Mammary epithelial cell (primary cell): ENCODE measurements at regions of chr4 and their contacts with region 1.

Region 1: DNA sequence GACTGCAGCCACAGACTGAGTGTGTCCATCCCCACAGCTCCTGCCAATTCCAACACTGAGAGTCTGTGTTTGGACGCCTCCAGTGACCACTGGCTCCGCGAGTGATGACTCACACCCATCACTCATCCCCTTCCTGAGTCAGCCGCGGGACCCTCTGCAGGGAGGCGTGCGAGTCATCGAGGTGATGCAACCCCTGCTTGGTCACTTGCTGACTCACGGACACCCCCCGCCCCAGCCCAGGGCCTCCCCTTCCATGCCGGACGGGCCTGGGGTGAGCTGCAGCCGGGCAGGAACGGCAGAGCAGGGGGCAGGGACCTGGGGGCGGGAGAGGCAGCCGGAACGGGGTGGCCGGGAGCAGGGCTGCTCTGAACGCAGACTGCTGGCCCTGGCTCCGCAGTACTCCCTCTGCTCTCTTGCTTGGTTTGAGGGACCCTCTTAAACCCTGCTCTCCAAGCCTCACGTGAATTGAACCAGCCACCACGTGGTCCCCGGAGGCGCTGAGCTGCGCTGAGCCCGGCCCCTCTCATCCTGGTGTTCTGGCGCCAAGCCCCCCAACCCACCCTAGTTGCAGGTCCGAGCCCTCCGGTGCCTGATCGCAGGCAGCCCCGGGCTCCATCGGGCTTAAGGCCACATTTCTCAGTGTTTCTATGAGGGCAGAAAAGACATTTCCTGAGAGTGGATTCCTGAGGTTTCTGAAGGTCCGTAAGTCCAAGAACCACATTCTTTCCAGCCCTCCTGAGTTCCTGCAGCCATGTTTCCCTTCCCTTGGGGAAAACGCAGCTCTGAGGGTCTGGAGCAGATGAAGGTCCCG is 32.4 kb downstream of the FGFRL1 start:
- DNase-seq: peak; percentile 99
- H3K4me3 ChIP-seq: peak overlapping the region in 1 of 3 experiments; percentile 1
- H3K27ac ChIP-seq: peak overlapping the region; percentile 31
- H3K4me1 ChIP-seq: peaks cover 48% of the 10 kb centered on the region
- H3K27me3 ChIP-seq: no peaks in the 10 kb centered on the region
- CTCF ChIP-seq: no peak

Region 2: GRCh38 chr4:674172-675035 is 369.5 kb before region 1 on chr4 and contains the starts of genes ATP5ME and MYL5:
- CTCF ChIA-PET with region 1: no interaction called
- dilution Hi-C with region 1: no loop called
- in situ Hi-C with region 1: no loop called
- intact Hi-C with region 1: no loop called
- DNase-seq: peak; percentile 95
- H3K4me3 ChIP-seq: peak within 1 kb of the TSS; percentile 78 to 93 (median 92)
- H3K27ac ChIP-seq: peak within 1 kb of the TSS; percentile 86
- H3K4me1 ChIP-seq: peaks cover 30% of the 10 kb centered on the region
- H3K27me3 ChIP-seq: no peaks in the 10 kb centered on the region
- CTCF ChIP-seq: peak; percentile 91 to 93
- total RNA-seq, gene ATP5ME: 38.7 to 284 TPM
- total RNA-seq, gene MYL5: 11.2 to 31.9 TPM

Region 3: DNA sequence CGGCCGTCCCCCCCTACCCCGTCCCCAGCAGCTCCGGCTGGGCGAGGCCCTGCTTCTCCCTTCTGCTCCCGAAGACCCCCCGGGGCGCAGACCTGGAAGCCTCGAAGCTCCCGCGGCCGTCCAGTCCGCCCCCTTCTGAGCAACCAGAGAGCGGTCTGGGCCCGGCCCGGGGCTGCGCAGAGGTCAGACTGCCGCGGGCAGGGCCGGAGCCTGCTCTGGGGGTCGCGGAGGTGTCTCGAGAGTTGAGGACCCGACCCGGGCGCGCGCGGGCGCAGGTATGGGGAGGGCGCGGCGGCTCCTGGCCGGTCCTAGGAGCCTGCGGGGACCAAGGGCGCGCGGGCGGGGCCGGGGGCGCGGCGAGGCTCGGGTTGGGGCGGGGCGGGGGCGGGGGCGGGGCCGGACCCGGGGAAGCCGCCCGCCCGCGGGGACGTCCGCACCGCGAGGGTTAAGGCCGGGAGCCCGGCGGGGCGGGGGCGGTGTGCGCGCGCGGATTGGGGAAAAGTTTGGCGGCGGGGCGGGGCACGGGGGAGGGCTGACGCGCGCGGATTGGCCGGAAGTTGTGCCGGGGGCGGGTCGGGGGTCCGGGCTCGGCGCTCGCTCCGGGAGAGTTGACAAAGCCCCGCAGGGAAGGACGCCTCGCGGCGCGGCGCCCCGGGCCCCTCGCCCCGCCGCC is 32.7 kb before region 1 on chr4 and contains the start of gene FGFRL1:
- CTCF ChIA-PET with region 1: no interaction called
- dilution Hi-C with region 1: no loop called
- in situ Hi-C with region 1: no loop called
- intact Hi-C with region 1: loop called (anchors 1 kb)
- DNase-seq: peak; percentile 86
- H3K4me3 ChIP-seq: peak within 1 kb of the TSS; percentile 39 to 49 (median 47)
- H3K27ac ChIP-seq: peak within 1 kb of the TSS; percentile 39
- H3K4me1 ChIP-seq: peaks cover 20% of the 10 kb centered on the region
- H3K27me3 ChIP-seq: peaks cover 3% of the 10 kb centered on the region
- CTCF ChIP-seq: no peak
- total RNA-seq, gene FGFRL1: 12.8 to 15.0 TPM

Region 4: DNA sequence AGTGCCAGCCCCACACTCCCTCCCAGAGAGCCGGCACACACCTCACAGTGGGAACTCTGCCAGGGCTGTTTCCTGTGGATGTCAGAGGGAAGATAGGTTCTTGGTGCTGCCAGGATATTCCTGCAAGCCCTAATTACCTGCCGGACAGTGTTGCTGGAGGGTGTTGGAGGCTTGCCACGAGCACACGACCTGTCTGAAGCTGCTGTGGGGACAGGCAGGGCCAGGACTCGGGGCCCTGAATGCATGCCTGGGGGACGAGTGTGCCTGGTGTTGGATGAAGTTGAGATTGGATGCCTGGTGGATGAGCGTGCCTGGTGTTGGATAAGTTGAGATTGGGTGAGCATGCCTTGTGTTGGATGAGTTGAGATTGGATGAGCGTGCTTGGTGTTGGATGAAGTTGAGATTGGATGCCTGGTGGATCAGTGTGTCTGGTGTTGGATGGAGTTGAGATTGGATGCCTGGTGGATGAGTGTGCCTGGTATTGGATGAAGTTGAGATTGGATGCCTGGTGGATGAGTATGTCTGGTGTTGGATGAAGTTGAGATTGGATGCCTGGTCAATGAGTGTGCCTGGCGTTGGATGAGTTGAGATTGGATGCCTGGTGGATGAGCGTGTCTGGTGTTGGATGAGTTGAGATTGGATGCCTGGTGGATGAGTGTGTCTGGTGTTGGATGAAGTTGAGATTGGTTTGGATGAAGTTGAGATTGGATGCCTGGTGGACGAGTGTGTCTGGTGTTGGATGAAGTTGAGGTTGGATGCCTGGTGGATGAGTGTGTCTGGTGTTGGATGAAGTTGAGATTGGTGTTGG is 280.0 kb after region 1 on chr4:
- CTCF ChIA-PET with region 1: no interaction called
- dilution Hi-C with region 1: loop called (anchors 10 kb)
- in situ Hi-C with region 1: no loop called
- intact Hi-C with region 1: no loop called
- DNase-seq: peak; percentile 98
- H3K4me3 ChIP-seq: no peak overlapping the region
- H3K27ac ChIP-seq: peak overlapping the region; percentile 46
- H3K4me1 ChIP-seq: peaks cover 45% of the 10 kb centered on the region
- H3K27me3 ChIP-seq: no peaks in the 10 kb centered on the region
- CTCF ChIP-seq: no peak